ENCODE measurements at regions of chr12 and their contacts with region 1.

Region 1: DNA sequence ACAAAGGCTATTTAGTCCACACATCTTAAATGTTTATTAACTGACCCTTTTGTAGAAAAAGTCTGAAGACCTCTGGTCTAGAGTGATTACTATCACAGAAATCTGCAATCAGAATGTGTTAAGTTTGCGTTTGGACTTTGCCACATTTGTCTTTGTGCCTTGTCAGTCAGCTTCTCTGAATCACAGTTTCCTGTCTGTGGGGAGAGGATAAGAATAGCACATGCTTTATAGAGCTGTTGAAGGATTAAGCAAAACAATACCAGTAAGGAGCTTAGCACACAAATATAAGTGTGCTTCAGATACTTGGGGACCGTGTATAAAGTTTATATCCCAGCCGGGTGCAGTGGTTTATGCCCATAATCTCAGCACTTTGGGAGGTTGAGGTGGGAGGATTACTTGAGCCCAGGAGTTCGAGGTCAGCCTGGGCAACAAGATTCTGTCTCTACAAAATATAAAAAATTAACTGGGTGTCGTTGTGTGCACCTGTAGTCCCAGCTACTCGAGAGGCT is 63.0 kb upstream of the BTG1 start:
- DNase-seq: no peak
- H3K4me3 Mint-ChIP-seq: peak overlapping the region; percentile 70
- H3K27ac Mint-ChIP-seq: peak overlapping the region; percentile 87
- H3K4me1 Mint-ChIP-seq: peaks cover 35% of the 10 kb centered on the region
- H3K27me3 Mint-ChIP-seq: no peaks in the 10 kb centered on the region

Region 2: DNA sequence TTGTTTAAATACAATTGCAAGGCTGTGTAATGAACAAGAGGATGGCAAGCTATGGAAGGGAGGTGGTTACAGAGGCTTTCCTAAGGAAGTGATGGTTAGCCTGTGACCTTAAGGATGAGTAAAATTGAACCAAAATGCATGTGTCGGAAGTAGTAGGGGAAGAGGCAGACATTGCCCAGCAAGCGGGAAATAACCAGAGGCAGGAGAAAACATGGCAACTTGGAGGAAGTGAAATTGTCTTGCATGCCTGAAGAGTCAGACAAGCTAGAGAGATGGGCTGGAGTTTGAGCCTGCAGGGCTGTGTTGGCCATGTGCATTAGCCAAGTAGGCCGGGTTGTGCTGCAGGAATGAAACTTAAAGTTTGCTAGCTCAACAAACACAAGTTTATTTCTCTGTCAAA is 159.3 kb before region 1 on chr12:
- CTCF ChIA-PET with region 1: no interaction called
- POLR2A ChIA-PET with region 1: no interaction called
- intact Hi-C with region 1: loop called (anchors 10 kb)
- DNase-seq: no peak
- H3K4me3 Mint-ChIP-seq: no peak overlapping the region
- H3K27ac Mint-ChIP-seq: no peak overlapping the region
- H3K4me1 Mint-ChIP-seq: peaks cover 70% of the 10 kb centered on the region
- H3K27me3 Mint-ChIP-seq: no peaks in the 10 kb centered on the region

Region 3: GRCh38 chr12:92185052-92185451 is 23.6 kb before region 1 on chr12:
- CTCF ChIA-PET with region 1: no interaction called
- POLR2A ChIA-PET with region 1: interaction called, 5 read pairs
- intact Hi-C with region 1: loop called (anchors 1 kb)
- DNase-seq: peak; percentile 49
- H3K4me3 Mint-ChIP-seq: no peak overlapping the region
- H3K27ac Mint-ChIP-seq: peak overlapping the region; percentile 47
- H3K4me1 Mint-ChIP-seq: peaks cover 46% of the 10 kb centered on the region
- H3K27me3 Mint-ChIP-seq: no peaks in the 10 kb centered on the region

Region 4: GRCh38 chr12:92253301-92253700 is 44.6 kb after region 1 on chr12:
- CTCF ChIA-PET with region 1: no interaction called
- POLR2A ChIA-PET with region 1: no interaction called
- intact Hi-C with region 1: no loop called
- DNase-seq: no peak
- H3K4me3 Mint-ChIP-seq: no peak overlapping the region
- H3K27ac Mint-ChIP-seq: no peak overlapping the region
- H3K4me1 Mint-ChIP-seq: peaks cover 4% of the 10 kb centered on the region
- H3K27me3 Mint-ChIP-seq: no peaks in the 10 kb centered on the region

Region 5: DNA sequence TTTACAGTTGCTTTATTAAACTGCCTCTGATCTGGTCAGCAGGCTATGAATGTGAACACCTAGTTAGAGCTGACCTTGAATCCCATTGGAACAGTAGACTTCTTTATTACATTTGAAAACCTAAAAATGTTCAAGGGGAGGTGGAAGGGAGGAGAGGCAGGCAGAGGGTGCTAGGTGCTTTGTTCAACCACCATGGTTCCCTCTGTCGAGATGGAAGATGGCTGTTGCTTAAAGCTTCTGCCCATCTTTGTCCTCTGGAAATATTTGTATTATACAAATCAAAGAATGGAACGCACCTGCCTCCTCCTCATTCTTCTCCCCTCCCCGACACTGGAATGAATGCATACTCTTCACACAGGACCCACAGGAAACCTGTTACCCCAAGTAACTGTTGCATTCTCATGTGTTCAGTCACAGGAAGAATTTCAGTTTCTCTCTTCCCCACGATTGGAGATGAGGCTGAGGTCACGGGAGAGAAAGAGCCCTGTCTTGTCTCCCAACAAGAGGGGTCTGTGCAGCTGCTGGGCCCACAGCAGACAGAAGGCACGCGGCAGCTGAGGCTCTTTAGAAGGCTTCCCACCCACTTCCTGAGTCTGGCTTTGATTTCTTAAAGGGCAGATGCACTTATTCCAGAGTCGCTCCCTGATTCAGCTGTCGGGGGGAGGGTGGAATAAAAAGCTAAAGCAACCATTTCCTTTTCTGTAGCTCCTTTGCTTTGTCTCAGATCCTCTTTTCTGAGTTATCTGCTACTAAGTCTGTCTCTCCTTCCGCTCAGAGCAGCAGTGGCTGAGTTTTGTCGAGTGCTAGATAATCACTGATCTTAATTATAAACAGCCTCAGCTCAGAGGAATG is 154.9 kb after region 1 on chr12:
- CTCF ChIA-PET with region 1: no interaction called
- POLR2A ChIA-PET with region 1: no interaction called
- intact Hi-C with region 1: loop called (anchors 2 kb)
- DNase-seq: peak; percentile 55
- H3K4me3 Mint-ChIP-seq: peak overlapping the region; percentile 74
- H3K27ac Mint-ChIP-seq: peak overlapping the region; percentile 87
- H3K4me1 Mint-ChIP-seq: peaks cover 56% of the 10 kb centered on the region
- H3K27me3 Mint-ChIP-seq: no peaks in the 10 kb centered on the region

Region 6: GRCh38 chr12:92593734-92594402 is 385.2 kb after region 1 on chr12:
- CTCF ChIA-PET with region 1: no interaction called
- POLR2A ChIA-PET with region 1: no interaction called
- intact Hi-C with region 1: loop called (anchors 2 kb)
- DNase-seq: peak; percentile 87
- H3K4me3 Mint-ChIP-seq: peak overlapping the region; percentile 25
- H3K27ac Mint-ChIP-seq: peak overlapping the region; percentile 92
- H3K4me1 Mint-ChIP-seq: peaks cover 80% of the 10 kb centered on the region
- H3K27me3 Mint-ChIP-seq: no peaks in the 10 kb centered on the region